Heart left ventricle (tissue), 16 donors: ENCODE measurements at regions of chr4 and their contacts with region 1.

Region 1: DNA sequence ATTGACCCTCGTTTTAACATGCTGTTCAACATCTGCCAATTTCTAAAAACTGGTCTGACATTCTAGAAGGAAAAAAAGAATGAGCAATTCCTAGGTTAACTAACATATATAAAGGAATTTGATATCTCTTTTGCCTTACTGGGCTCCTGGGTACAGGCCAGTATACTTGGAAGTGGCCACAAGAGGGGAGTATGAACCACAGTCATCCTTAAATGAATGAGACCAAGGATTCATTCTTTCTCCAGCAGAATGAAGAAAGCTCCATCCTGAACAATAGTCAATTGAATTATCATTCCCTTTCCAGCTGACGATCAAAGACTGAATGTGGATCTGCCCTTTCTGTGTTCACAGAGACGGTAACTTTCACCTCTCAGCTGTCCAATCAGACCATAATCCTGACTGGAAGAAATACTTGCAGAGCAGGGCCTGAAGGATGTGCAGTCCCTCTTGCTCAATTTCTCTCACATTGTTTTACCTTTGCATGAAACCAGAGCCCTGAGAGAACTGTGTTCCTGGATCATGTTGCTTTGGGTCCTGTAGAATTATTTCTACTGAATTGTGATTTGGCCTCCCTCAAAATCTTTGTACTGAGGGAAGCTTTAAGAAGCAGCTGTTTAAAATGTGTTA is 14.8 kb upstream of the SPARCL1 start:
- DNase-seq: peak in 2 of 5 donors; percentile 26 to 36
- ATAC-seq: peak in 3 of 4 donors; percentile 65 to 73 (median 68)
- H3K4me3 ChIP-seq: no peak overlapping the region
- H3K27ac ChIP-seq: peak overlapping the region in 2 of 12 donors; percentile 79
- H3K4me1 ChIP-seq: peaks cover 0 to 28% (median 0%) of the 10 kb centered on the region in 12 donors
- H3K27me3 ChIP-seq: no peaks in the 10 kb centered on the region
- CTCF ChIP-seq: peak; percentile 47 to 74 (median 58)
- POLR2A ChIP-seq: no peak

Region 2: GRCh38 chr4:87375719-87376291 is 168.1 kb before region 1 on chr4:
- intact Hi-C with region 1: loop called in 2 of 10 experiments (anchors 10 kb)
- DNase-seq: no peak
- ATAC-seq: peak; percentile 55 to 86 (median 65)
- H3K4me3 ChIP-seq: no peak overlapping the region
- H3K27ac ChIP-seq: peak overlapping the region in 1 of 12 donors; percentile 25
- H3K4me1 ChIP-seq: peaks cover 0 to 9% (median 3%) of the 10 kb centered on the region in 12 donors
- H3K27me3 ChIP-seq: no peaks in the 10 kb centered on the region
- CTCF ChIP-seq: peak; percentile 44 to 80 (median 68)
- POLR2A ChIP-seq: no peak

Region 3: GRCh38 chr4:87657525-87657924 is 113.6 kb after region 1 on chr4:
- intact Hi-C with region 1: loop called in 1 of 10 experiments (anchors 10 kb)
- DNase-seq: no peak
- ATAC-seq: no peak
- H3K4me3 ChIP-seq: no peak overlapping the region
- H3K27ac ChIP-seq: no peak overlapping the region
- H3K4me1 ChIP-seq: peaks cover 0 to 5% (median 0%) of the 10 kb centered on the region in 12 donors
- H3K27me3 ChIP-seq: no peaks in the 10 kb centered on the region
- CTCF ChIP-seq: no peak
- POLR2A ChIP-seq: no peak

Region 4: DNA sequence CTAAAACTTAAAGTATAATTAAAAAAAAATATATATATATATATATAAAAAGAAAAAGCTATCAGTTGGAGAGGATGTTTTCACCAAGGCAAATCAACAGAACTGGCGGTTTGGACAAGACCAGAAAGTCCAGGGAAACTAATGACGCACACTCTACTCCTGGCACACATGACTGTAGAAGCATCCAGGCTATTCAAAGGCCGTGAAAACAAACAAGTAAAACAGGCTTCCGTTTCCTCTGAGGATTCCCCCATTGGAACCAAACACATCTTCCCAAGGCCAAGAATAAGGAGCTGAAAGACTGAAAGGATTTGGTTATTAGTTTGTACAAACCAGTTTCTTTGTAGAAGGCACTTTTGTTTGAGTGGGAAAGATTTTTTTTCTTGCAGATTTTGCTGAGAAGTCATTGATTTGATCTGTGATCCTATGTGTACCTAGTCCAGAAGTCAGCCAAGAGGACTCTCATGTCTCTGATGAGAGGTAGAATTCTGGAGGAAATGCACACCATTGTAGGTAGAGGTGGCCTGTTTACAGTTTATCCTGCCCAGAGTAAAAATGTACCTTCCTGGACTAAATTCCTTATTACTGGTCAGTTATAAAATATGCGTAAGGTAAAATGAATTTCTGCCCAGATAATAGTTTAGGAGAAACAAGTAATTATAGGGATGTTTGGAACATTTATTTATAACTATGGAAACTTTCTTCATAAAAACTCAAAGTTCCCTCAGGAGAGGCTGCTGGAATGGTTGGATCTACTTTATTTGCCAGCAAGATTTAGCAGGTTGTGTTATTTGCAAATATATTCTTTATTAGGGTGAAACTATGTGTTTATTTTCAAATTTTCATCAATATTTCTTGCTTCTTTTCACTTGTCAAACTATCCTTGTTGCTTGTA is 172.7 kb after region 1 on chr4:
- intact Hi-C with region 1: loop called in 1 of 10 experiments (anchors 5 kb)
- DNase-seq: peak in 4 of 5 donors; percentile 48 to 77 (median 65)
- ATAC-seq: peak; percentile 86 to 95 (median 90)
- H3K4me3 ChIP-seq: no peak overlapping the region
- H3K27ac ChIP-seq: peak overlapping the region; percentile 61 to 94 (median 77)
- H3K4me1 ChIP-seq: peaks cover 0 to 29% (median 15%) of the 10 kb centered on the region in 12 donors
- H3K27me3 ChIP-seq: no peaks in the 10 kb centered on the region
- CTCF ChIP-seq: no peak
- POLR2A ChIP-seq: no peak

Region 5: GRCh38 chr4:87838890-87839591 is 295.1 kb after region 1 on chr4:
- intact Hi-C with region 1: loop called in 3 of 10 experiments (anchors 2 to 5 kb)
- DNase-seq: no peak
- ATAC-seq: peak in 2 of 4 donors; percentile 39 to 49
- H3K4me3 ChIP-seq: no peak overlapping the region
- H3K27ac ChIP-seq: peak overlapping the region in 3 of 12 donors; percentile 13 to 47 (median 34)
- H3K4me1 ChIP-seq: peaks cover 0 to 27% (median 5%) of the 10 kb centered on the region in 12 donors
- H3K27me3 ChIP-seq: no peaks in the 10 kb centered on the region
- CTCF ChIP-seq: peak; percentile 66 to 84 (median 76)
- POLR2A ChIP-seq: no peak

Region 6: GRCh38 chr4:87973283-87974169 is 429.6 kb after region 1 on chr4:
- intact Hi-C with region 1: loop called in 2 of 10 experiments (anchors 5 to 10 kb)
- DNase-seq: peak; percentile 43 to 70 (median 52)
- ATAC-seq: peak in 3 of 4 donors; percentile 53 to 81 (median 76)
- H3K4me3 ChIP-seq: peak overlapping the region in 2 of 12 donors; percentile 11 to 13
- H3K27ac ChIP-seq: no peak overlapping the region
- H3K4me1 ChIP-seq: peaks cover 0 to 19% (median 0%) of the 10 kb centered on the region in 12 donors
- H3K27me3 ChIP-seq: peaks cover 0 to 21% (median 0%) of the 10 kb centered on the region in 9 donors
- CTCF ChIP-seq: peak; percentile 71 to 90 (median 82)
- POLR2A ChIP-seq: no peak